ENCODE measurements at regions of chr11 and their contacts with region 1.

Region 1: DNA sequence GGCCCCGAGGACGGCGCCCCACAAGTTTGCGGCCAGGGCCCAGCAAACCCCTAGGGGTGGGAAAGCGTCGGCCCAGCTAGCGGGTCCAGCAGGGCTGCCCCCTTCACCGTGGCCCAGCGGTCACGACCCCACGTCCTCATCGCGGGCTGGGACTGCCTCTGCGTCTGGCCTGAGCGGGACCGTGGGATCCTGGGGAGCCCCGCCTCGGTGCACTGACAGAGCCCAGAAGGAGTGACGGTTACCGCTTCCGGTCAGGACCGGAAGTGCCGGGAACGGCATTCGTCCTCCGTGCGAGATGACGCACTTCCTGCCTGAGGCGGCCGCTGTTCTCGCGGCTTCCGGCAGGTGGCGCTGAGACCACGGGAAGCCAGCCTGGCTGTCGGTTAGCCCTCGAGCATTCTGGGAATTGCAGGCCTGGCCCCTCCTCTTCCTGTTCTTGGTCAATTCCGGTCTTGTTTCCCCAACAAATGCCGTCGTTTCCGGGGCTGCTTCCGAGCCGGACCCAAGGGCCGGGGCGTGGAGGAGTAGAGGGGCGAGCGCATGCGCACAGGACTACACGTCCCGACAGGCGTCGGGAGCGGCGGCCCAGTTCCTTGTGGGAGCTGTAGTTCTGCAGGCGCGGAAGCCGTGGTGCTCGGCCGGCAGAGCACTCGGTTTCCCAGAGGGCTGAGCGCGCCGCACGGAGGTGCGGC is at the start of gene TSSC4:
- DNase-seq: peak; percentile 100
- ATAC-seq: peak; percentile 91
- H3K4me3 Mint-ChIP-seq: peak within 1 kb of the TSS; percentile 87
- H3K27ac Mint-ChIP-seq: peak within 1 kb of the TSS; percentile 84
- H3K4me1 Mint-ChIP-seq: peaks cover 16% of the 10 kb centered on the region
- H3K27me3 Mint-ChIP-seq: no peaks in the 10 kb centered on the region
- total RNA-seq, gene TSSC4: 19.8 to 38.4 TPM

Region 2: GRCh38 chr11:1852877-1853276 is 547.3 kb before region 1 on chr11 and contains the start of gene LSP1:
- CTCF ChIA-PET with region 1: no interaction called
- POLR2A ChIA-PET with region 1: no interaction called
- intact Hi-C with region 1: loop called in 1 of 2 experiments (anchors 5 kb)
- DNase-seq: peak; percentile 93
- ATAC-seq: peak; percentile 60
- H3K4me3 Mint-ChIP-seq: peak within 1 kb of the TSS; percentile 97
- H3K27ac Mint-ChIP-seq: peak within 1 kb of the TSS; percentile 98
- H3K4me1 Mint-ChIP-seq: peaks cover 66% of the 10 kb centered on the region
- H3K27me3 Mint-ChIP-seq: no peaks in the 10 kb centered on the region
- total RNA-seq, gene LSP1: 193 to 227 TPM

Region 3: GRCh38 chr11:2298795-2299761 is 101.1 kb before region 1 on chr11:
- CTCF ChIA-PET with region 1: no interaction called
- POLR2A ChIA-PET with region 1: no interaction called
- intact Hi-C with region 1: loop called in 1 of 2 experiments (anchors 1 kb)
- DNase-seq: peak; percentile 62
- ATAC-seq: no peak
- H3K4me3 Mint-ChIP-seq: no peak overlapping the region
- H3K27ac Mint-ChIP-seq: no peak overlapping the region
- H3K4me1 Mint-ChIP-seq: peaks cover 34% of the 10 kb centered on the region
- H3K27me3 Mint-ChIP-seq: no peaks in the 10 kb centered on the region

Region 4: DNA sequence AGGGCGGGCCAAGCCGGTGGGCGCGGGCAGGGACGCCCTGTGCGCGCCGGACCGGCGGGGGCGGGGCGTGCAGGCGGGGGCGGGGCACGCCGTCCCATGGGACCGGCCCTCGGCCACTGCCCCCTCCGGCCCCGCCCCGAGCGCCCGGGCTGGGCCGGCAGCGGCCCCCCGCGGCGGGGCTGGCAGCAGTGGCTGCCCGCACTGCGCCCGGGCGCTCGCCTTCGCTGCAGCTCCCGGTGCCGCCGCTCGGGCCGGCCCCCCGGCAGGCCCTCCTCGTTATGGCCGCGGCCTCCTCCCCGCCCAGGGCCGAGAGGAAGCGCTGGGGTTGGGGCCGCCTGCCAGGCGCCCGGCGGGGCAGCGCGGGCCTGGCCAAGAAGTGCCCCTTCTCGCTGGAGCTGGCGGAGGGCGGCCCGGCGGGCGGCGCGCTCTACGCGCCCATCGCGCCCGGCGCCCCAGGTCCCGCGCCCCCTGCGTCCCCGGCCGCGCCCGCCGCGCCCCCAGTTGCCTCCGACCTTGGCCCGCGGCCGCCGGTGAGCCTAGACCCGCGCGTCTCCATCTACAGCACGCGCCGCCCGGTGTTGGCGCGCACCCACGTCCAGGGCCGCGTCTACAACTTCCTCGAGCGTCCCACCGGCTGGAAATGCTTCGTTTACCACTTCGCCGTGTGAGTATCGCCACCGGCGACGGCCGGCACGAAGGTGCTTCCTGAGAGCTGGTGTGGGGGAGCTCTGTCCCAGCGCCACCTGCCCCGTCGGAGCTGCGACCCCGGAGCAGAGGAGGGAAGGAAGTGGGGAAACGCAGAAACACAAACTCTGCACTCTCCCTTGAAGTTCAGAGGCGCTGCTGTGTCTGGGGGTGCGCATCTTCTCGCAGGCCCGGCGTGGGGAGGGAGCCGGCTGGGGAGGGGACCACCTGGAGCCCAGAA is 44.9 kb after region 1 on chr11 and contains the start of gene KCNQ1:
- CTCF ChIA-PET with region 1: no interaction called
- POLR2A ChIA-PET with region 1: no interaction called
- intact Hi-C with region 1: loop called in 1 of 2 experiments (anchors 1 kb)
- DNase-seq: peak; percentile 63
- ATAC-seq: peak; percentile 63
- H3K4me3 Mint-ChIP-seq: peak within 1 kb of the TSS; percentile 86
- H3K27ac Mint-ChIP-seq: peak within 1 kb of the TSS; percentile 71
- H3K4me1 Mint-ChIP-seq: peaks cover 38% of the 10 kb centered on the region
- H3K27me3 Mint-ChIP-seq: no peaks in the 10 kb centered on the region
- total RNA-seq, gene KCNQ1: 9.1 to 10.9 TPM

Region 5: DNA sequence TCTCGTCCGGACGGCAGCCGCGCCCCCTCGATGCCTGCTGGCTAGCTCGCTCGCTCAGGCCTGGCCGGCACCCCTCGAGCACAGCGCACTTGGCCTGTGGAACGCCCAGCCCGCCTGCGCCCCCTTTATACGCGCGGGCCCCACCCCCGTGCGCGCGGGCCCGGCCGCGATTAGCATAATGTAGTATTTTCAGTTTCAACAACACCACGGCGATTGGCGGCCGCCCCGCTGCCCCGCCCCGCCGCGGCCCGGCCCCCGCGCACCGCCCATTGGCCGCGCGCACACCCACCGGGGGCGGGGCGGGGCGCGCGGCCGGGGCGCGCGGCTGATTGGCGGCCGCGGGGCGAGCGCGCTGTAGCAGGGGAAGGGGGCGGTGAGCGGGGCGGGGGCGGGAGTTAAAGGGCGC is 485.5 kb after region 1 on chr11 and contains the start of gene CDKN1C:
- CTCF ChIA-PET with region 1: no interaction called
- POLR2A ChIA-PET with region 1: no interaction called
- intact Hi-C with region 1: loop called in 1 of 2 experiments (anchors 1 kb)
- DNase-seq: peak; percentile 87
- ATAC-seq: peak; percentile 85
- H3K4me3 Mint-ChIP-seq: peak within 1 kb of the TSS; percentile 67
- H3K27ac Mint-ChIP-seq: no peak within 1 kb of the TSS
- H3K4me1 Mint-ChIP-seq: peaks cover 4% of the 10 kb centered on the region
- H3K27me3 Mint-ChIP-seq: peaks cover 5% of the 10 kb centered on the region
- total RNA-seq, gene CDKN1C: 0.21 to 0.53 TPM

Region 6: GRCh38 chr11:3378426-3379423 is 978.5 kb after region 1 on chr11 and contains the start of gene ZNF195:
- CTCF ChIA-PET with region 1: no interaction called
- POLR2A ChIA-PET with region 1: no interaction called
- intact Hi-C with region 1: loop called in 1 of 2 experiments (anchors 5 kb)
- DNase-seq: peak; percentile 99
- ATAC-seq: peak; percentile 100
- H3K4me3 Mint-ChIP-seq: peak within 1 kb of the TSS; percentile 91
- H3K27ac Mint-ChIP-seq: peak within 1 kb of the TSS; percentile 93
- H3K4me1 Mint-ChIP-seq: peaks cover 47% of the 10 kb centered on the region
- H3K27me3 Mint-ChIP-seq: no peaks in the 10 kb centered on the region
- total RNA-seq, gene ZNF195: 32.6 to 36.2 TPM